AG04449 (cell line): ENCODE measurements at regions of chr4 and their contacts with region 1.

Region 1: GRCh38 chr4:184287697-184288255 is 70.1 kb upstream of the ENPP6 start:
- DNase-seq: no peak
- H3K4me3 ChIP-seq: no peak overlapping the region
- CTCF ChIP-seq: peak; percentile 18

Region 2: DNA sequence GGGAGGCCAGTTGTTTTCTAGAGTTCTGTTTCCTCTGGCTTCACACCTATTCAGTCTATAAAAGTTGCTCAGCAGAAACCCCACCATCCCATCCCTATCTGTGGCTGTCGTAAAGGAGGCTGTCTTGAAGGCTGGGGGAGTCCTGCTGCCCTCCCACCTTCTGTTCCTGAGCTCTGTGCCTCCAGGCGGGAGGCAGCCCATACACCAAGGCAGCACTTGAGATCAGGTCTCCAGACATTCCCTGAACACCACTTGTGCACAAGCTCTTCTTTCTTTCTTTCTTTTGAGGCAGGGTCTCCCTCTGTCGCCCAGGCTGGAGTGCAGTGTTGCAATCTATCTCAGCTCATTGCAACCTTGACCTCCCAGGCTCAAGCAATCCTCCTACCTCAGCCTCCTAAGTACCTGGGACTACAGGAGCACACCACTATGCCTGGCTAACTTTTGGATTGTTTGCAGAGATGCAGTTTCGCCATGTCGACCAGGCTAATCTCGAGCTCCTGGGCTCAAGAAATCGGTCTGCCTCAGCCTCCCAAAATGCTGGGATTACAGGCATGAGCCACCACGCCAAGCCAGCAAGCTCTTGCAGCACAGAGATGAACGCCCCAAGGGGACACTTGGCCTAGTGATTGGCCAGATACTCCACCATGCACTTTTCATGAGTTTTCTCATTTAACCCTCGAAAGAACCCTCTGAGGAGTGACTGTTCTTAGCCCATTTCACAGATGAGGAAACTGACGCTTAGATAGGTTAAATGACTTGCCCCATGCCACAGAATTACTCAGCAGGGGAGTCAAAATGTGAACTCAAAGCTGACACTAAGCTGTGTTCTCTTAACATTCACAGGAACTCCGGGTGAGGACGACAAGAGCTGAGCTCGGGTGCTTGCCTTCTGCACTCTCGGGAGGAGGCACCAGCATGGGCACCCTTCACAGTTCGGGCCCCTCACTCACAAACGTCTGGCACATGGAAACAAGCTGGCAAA is 14.3 kb before region 1 on chr4:
- CTCF ChIA-PET with region 1: interaction called, 11 read pairs
- POLR2A ChIA-PET with region 1: no interaction called
- DNase-seq: no peak
- H3K4me3 ChIP-seq: no peak overlapping the region
- CTCF ChIP-seq: no peak

Region 3: DNA sequence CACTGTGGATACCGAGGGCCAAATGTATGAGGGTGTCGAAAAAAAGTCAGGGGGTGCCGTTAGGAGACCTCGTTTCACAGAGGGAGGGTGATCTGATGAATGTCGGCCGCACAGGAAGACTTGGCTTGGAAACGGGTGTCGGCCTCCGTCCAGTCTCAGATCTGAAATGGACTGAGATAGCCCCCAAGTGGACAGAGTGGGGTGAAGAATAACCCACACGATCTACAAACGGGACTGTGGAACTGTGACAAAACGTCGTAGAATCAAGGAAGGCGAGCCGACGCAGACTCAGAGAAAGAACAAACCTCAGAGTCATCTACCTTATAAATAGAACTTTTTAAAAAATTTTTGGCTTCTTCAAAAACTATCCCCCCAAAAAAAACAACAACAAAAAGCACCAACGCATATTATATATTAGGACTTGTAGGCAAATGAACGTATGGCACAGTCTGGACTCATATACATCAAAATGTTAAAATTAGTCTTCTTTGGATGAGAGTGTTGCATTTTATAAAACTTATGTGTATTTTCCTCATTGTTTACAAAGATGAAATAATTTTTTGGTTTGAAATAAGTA is 250.3 kb after region 1 on chr4:
- CTCF ChIA-PET with region 1: interaction called, 13 read pairs
- POLR2A ChIA-PET with region 1: no interaction called
- DNase-seq: peak; percentile 52
- H3K4me3 ChIP-seq: peak overlapping the region; percentile 65
- CTCF ChIP-seq: peak; percentile 64